Transverse colon (tissue), 4 donors: ENCODE measurements at regions of chr15 and their contacts with region 1.

Region 1: GRCh38 chr15:71448688-71449114 is 333.4 kb downstream of the THSD4 start:
- DNase-seq: peak; percentile 22
- H3K4me3 ChIP-seq: no peak overlapping the region
- H3K27ac ChIP-seq: no peak overlapping the region
- H3K4me1 ChIP-seq: peaks cover 0 to 26% (median 2%) of the 10 kb centered on the region in 4 donors
- H3K27me3 ChIP-seq: no peaks in the 10 kb centered on the region
- CTCF ChIP-seq: peak; percentile 76 to 90 (median 86)
- EP300 ChIP-seq: no peak
- POLR2A ChIP-seq: no peak

Region 2: DNA sequence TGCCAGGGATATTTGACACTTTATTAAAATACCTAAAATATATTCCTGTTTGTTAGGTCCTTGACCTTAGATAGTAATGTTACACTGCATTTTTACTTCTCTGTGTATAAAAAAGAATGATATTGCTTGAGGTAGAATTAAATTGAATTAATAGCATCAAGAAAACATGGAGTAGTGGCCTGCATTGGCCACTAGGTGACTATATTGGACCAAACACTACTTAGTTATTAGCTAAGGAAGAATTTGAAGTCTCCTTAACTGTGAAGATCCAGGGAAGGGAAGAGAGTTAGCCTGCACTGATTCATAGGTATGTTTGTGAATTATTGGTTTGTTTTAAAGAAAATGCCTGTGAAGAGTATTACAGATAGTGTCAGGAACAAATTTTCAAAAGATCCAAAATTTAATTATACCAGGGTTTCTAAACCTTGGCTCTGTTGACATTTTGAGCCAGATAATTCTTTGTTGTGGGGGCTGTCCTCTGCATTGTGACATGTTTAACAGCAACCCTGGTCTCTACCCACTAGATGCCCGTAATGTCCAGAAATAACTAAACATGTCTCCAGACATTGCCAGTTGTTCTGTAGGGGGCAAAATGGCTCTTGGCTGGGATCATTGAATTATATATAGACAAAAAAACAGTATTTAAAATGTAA is 437.1 kb before region 1 on chr15:
- in situ Hi-C with region 1: loop called in 3 of 4 experiments (anchors 25 kb)
- intact Hi-C with region 1: loop called (anchors 5 kb)
- DNase-seq: peak; percentile 10
- H3K4me3 ChIP-seq: no peak overlapping the region
- H3K27ac ChIP-seq: no peak overlapping the region
- H3K4me1 ChIP-seq: no peaks in the 10 kb centered on the region
- H3K27me3 ChIP-seq: no peaks in the 10 kb centered on the region
- CTCF ChIP-seq: peak; percentile 55 to 74 (median 67)
- EP300 ChIP-seq: no peak
- POLR2A ChIP-seq: no peak

Region 3: DNA sequence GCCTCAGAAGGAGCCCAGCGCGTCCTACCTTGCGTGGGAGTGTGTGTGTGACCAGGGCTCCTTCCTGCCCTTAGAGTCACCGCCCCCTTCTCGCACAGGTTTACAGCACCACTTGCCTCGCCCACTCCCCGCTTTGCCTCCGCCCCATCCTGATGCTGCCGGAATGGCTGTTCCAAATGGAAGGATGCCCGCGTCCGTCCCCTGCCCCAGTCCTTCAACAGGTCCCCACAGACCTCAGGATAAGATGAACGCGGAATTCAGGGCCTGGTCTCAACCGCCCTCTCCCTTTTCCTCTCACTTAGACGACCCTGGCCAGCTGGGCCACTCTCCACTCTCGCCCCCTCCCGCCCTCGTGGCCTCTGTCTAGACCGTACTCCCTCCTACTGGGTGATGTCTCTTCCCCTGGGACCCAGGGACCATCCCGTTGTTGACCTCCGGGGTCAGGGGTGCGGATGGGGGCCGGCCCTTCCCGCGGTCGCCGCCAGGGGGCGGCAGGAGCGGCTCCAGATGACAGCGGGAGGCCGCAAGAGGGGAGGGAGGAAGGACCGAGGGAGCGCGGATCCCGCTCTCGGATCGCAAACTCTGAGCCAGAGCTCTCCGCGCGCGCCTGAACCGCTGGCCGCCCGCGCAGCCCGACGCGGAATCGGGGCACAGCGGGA is 333.7 kb before region 1 on chr15 and contains the start of gene THSD4:
- in situ Hi-C with region 1: loop called in 3 of 4 experiments (anchors 5 to 10 kb)
- intact Hi-C with region 1: no loop called
- DNase-seq: peak; percentile 78
- H3K4me3 ChIP-seq: peak within 1 kb of the TSS; percentile 36 to 81 (median 54)
- H3K27ac ChIP-seq: peak within 1 kb of the TSS; percentile 71 to 86 (median 80)
- H3K4me1 ChIP-seq: peaks cover 3 to 16% (median 9%) of the 10 kb centered on the region in 4 donors
- H3K27me3 ChIP-seq: peaks cover 8% of the 10 kb centered on the region
- CTCF ChIP-seq: peak; percentile 92 to 98 (median 96)
- EP300 ChIP-seq: no peak
- POLR2A ChIP-seq: no peak
- total RNA-seq, gene THSD4: 13.3 to 57.2 (median 47.4) TPM

Region 4: GRCh38 chr15:71386448-71387236 is 62.1 kb before region 1 on chr15:
- in situ Hi-C with region 1: loop called in 2 of 4 experiments (anchors 10 kb)
- intact Hi-C with region 1: no loop called
- DNase-seq: no peak
- H3K4me3 ChIP-seq: no peak overlapping the region
- H3K27ac ChIP-seq: no peak overlapping the region
- H3K4me1 ChIP-seq: peaks cover 5 to 34% (median 13%) of the 10 kb centered on the region in 4 donors
- H3K27me3 ChIP-seq: no peaks in the 10 kb centered on the region
- CTCF ChIP-seq: peak; percentile 35 to 68 (median 57)
- EP300 ChIP-seq: no peak
- POLR2A ChIP-seq: no peak

Region 5: GRCh38 chr15:71730277-71731144 is 281.8 kb after region 1 on chr15:
- in situ Hi-C with region 1: loop called in 3 of 4 experiments (anchors 10 to 25 kb)
- intact Hi-C with region 1: loop called (anchors 10 kb)
- DNase-seq: peak; percentile 44
- H3K4me3 ChIP-seq: no peak overlapping the region
- H3K27ac ChIP-seq: no peak overlapping the region
- H3K4me1 ChIP-seq: peaks cover 0 to 31% (median 7%) of the 10 kb centered on the region in 4 donors
- H3K27me3 ChIP-seq: no peaks in the 10 kb centered on the region
- CTCF ChIP-seq: peak; percentile 69 to 82 (median 75)
- EP300 ChIP-seq: no peak
- POLR2A ChIP-seq: no peak

Region 6: GRCh38 chr15:71800835-71801745 is 352.4 kb after region 1 on chr15:
- in situ Hi-C with region 1: loop called in 2 of 4 experiments (anchors 10 kb)
- intact Hi-C with region 1: no loop called
- DNase-seq: peak; percentile 55
- H3K4me3 ChIP-seq: no peak overlapping the region
- H3K27ac ChIP-seq: no peak overlapping the region
- H3K4me1 ChIP-seq: peaks cover 0 to 8% (median 5%) of the 10 kb centered on the region in 4 donors
- H3K27me3 ChIP-seq: no peaks in the 10 kb centered on the region
- CTCF ChIP-seq: peak; percentile 77 to 96 (median 81)
- EP300 ChIP-seq: no peak
- POLR2A ChIP-seq: no peak